ENCODE measurements at regions of chr7 and their contacts with region 1.

Region 1: DNA sequence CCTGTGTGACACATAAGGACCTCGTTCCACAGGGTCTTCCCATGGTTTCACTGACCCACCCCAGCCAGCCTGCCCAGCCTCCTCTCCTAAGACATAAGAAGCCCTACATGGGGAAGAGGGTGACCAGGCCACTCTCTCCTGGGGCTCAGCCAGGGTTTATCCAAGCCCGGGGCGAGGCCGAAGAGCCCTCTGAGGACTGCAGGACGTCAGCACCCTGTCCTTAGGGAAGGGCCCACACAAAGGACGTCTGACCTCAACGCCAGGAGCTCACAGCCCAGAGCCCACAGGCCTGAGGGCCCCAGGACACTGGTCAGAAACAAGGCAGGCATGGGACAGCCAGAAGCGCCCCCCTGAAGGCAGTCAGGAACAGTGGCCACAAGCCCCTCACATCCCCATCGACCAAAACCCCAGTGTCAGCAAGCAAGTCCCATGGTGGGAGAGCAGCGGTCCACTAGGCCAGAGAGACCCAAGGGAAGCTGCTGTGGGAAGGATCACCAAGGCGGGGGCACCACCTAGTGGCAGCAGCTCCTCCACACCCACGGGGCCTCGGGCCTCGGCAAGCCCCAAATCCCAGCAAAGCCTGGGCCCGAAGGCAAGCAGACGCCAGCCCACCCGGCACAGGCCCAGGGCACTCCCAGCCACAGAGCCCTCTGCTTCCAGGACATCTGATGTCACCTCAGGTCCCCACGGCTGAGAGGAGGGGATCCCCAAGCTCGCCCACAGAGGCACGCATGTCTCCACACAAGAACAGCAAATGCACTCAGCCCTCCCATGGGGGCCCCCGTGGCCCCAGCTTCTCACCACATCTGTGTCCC is 23.4 kb downstream of the MAD1L1 start:
- DNase-seq: peak; percentile 71 to 89 (median 85)
- H3K4me3 ChIP-seq: no peak overlapping the region
- H3K27ac ChIP-seq: no peak overlapping the region
- H3K4me1 ChIP-seq: peaks cover 3% of the 10 kb centered on the region
- H3K27me3 ChIP-seq: no peaks in the 10 kb centered on the region
- CTCF ChIP-seq: peak; percentile 46 to 87 (median 79)
- EP300 ChIP-seq: no peak
- POLR2A ChIP-seq: no peak

Region 2: DNA sequence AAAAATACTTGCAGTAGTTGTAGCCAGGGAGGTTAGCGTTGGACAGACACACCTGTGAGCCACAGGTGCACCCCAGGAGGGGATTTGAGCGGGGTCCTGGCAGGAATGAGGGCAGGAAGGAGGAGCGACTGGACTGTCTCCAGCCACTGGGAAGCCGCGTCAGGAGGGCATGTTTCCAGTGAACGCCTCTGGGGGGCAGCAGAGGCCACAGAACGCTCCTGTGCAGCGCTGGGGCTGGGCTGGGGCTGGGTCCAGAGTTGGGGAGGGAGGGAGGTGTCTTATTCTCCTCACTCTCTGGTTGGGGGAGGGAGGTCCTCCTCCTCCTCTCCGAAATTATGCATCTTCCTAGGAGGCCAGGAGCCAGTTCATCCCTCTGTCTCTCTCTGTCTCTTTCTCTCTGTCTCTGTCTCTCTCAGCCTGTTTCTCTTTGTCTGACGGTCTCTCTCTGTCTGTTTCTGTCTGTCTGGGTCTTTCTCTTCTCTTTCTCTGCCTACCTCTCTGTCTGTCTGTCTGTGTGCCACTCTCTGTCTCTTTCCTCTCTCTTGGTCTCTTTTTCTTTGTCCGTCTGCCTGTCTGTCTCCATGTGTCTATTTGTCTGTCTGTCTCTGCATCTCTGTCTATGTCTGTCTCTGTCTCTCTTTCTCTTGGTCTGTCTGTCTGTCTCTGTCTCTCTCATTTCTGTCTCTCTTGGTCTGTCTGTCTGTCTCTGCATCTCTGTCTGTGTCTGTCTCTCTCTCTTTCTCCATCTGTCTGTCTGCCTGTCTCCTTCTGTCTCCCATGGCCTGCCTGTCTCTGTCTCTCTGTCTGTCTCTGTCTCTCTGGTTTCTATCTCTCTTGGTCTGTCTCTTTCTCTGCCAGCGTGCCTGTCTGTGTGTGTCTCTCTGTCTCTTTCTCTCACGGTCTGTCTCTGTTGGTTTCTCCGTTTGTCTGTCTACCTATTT is 629.6 kb before region 1 on chr7:
- intact Hi-C with region 1: loop called in 3 of 4 experiments (anchors 5 to 10 kb)
- DNase-seq: peak; percentile 58 to 82 (median 80)
- H3K4me3 ChIP-seq: no peak overlapping the region
- H3K27ac ChIP-seq: no peak overlapping the region
- H3K4me1 ChIP-seq: no peaks in the 10 kb centered on the region
- H3K27me3 ChIP-seq: no peaks in the 10 kb centered on the region
- CTCF ChIP-seq: peak; percentile 52 to 72 (median 64)
- EP300 ChIP-seq: no peak
- POLR2A ChIP-seq: no peak

Region 3: DNA sequence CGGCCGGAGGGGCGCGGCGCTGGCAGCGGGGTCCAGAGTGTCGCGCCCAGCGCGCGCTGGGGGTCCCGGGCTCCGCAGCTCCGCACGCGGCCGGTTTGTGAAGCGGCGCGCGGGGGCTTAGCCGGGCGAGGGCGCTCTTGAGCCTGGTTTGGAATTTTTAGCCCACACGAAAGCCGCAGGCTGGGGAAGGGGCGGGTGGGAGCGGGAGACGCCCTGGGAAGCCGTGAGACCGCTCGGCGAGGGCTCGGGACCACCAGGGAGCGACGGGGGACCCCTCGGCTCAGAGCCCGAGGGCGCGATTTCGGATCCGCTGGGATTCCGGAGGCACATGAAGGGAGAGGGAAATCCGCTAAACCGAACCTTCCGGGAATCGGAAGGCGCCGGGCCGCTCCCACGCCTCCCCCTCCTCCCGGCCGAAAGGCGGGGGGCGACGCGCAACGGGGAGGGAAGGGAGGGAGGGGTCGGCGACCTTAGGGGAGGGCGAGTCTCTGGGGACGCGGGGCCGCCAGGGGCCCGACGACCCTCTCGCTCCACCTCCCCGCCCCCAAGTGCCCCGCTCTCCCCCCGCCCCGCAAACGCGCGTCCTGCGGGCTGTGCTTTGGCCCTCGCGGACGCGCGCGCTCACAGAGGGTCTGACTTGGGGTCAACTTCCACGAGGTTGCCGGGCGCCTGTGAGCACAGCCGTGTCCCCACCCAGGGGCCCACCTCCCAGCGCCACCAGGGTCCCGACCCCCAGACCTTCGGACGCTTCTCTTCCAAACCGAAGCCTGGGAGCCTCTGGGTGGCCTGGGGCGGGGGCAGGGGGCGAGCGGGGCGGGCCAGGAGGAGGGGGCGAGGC is 544.4 kb before region 1 on chr7:
- intact Hi-C with region 1: loop called (anchors 5 kb)
- DNase-seq: peak; percentile 34 to 82 (median 68)
- H3K4me3 ChIP-seq: peak overlapping the region; percentile 35
- H3K27ac ChIP-seq: no peak overlapping the region
- H3K4me1 ChIP-seq: peaks cover 5% of the 10 kb centered on the region
- H3K27me3 ChIP-seq: peaks cover 10% of the 10 kb centered on the region
- CTCF ChIP-seq: peak; percentile 20 to 56 (median 54)
- EP300 ChIP-seq: no peak
- POLR2A ChIP-seq: no peak

Region 4: GRCh38 chr7:1812509-1813393 is 396.6 kb before region 1 on chr7:
- intact Hi-C with region 1: loop called in 2 of 4 experiments (anchors 10 kb)
- DNase-seq: peak in 1 of 5 donors; percentile 27
- H3K4me3 ChIP-seq: no peak overlapping the region
- H3K27ac ChIP-seq: no peak overlapping the region
- H3K4me1 ChIP-seq: peaks cover 3% of the 10 kb centered on the region
- H3K27me3 ChIP-seq: no peaks in the 10 kb centered on the region
- CTCF ChIP-seq: no peak
- EP300 ChIP-seq: no peak
- POLR2A ChIP-seq: no peak

Region 5: DNA sequence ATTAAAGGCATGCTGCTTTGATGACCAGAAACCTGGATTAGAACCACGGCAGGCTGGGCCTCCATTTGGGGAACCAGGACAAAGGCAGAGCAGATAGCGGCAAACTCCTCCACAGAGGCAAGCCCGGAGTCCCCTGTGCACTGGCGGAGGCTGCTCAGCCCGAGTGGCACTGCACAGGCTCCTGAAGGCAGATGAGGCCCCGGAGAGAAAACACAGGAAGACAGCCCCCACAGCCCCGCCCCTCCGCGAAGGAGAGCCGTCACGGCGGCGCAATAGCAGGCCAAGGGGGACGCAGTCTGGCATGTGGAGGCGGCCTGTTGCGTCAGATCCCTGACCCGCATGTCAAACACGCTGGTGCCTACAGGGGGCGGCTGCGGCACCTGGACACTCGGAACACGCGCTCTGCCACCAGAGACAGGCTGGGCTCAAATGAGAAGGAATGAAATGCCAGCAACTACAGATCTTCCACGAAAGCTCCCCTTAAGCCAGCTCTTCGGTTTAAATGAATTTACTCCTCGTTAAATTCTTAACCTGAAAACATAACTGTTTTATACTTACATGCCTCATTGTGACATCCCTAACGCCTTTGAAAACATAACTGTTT is 105.1 kb before region 1 on chr7:
- intact Hi-C with region 1: loop called in 3 of 4 experiments (anchors 5 to 10 kb)
- DNase-seq: peak; percentile 93 to 96 (median 95)
- H3K4me3 ChIP-seq: peak overlapping the region; percentile 10
- H3K27ac ChIP-seq: peak overlapping the region; percentile 13 to 69
- H3K4me1 ChIP-seq: peaks cover 21% of the 10 kb centered on the region
- H3K27me3 ChIP-seq: no peaks in the 10 kb centered on the region
- CTCF ChIP-seq: peak; percentile 76 to 80 (median 77)
- EP300 ChIP-seq: no peak
- POLR2A ChIP-seq: no peak